ENCODE measurements at regions of chr14 and their contacts with region 1.

Region 1: DNA sequence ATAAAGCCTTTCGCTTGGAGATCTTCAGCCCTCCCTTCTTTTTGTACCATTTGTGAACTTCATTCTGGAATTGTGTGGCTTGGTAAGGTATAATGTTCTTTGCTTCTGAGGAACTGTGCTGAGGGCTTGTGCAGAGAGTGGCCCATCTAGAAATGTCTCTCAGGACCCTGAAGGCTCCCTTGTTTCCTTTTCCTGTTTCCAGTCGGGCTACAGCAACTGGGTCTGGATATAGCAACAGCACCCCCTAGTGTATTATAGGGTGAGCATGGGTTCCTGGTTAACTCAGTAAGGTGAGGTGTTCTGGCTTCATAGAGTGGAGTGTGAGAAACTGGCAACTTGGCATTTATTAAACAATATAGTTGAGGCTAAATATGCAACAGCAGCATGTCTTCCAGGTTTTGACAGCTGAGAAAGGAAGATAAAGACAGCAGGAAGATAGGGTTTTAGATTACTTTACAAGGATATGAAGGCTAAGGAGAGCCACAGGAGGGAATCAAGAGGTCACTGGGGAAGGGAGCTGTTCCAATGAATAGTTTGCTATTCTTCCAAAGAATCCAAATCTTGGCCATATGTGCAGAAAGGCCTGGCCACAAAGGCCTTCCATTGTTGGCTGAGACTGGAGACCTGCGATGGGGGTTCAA is 49.1 kb upstream of the RNU6-8 start:
- H3K4me3 ChIP-seq: no peak overlapping the region
- H3K27ac ChIP-seq: no peak overlapping the region
- H3K4me1 ChIP-seq: no peaks in the 10 kb centered on the region
- CTCF ChIP-seq: peak; percentile 55

Region 2: GRCh38 chr14:31934767-31935266 is 317.3 kb before region 1 on chr14:
- CTCF ChIA-PET with region 1: interaction called, 35 read pairs
- POLR2A ChIA-PET with region 1: interaction called, 4 read pairs
- H3K4me3 ChIP-seq: no peak overlapping the region
- H3K27ac ChIP-seq: no peak overlapping the region
- H3K4me1 ChIP-seq: peaks cover 17% of the 10 kb centered on the region
- CTCF ChIP-seq: peak; percentile 71

Region 3: DNA sequence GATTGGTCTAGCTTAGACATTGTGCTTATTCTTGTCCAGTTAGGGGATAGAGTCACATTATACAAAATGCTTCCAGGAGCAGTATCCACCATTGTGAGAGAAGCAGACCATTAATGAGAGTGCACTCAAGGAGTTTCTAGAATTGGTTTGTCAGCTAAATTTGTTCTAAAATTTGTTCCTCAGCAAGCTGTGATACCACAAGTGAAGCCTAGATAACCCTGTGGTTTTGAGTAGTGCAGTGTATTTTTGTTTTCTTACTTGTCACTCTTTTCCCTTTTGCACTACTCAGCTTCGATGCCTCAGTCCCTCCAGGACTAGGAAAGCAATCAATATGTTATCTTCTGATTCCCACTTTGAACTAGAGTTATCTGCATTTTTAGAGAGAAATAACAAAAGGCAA is 34.5 kb after region 1 on chr14:
- CTCF ChIA-PET with region 1: no interaction called
- POLR2A ChIA-PET with region 1: no interaction called
- H3K4me3 ChIP-seq: no peak overlapping the region
- H3K27ac ChIP-seq: no peak overlapping the region
- H3K4me1 ChIP-seq: no peaks in the 10 kb centered on the region
- CTCF ChIP-seq: no peak

Region 4: DNA sequence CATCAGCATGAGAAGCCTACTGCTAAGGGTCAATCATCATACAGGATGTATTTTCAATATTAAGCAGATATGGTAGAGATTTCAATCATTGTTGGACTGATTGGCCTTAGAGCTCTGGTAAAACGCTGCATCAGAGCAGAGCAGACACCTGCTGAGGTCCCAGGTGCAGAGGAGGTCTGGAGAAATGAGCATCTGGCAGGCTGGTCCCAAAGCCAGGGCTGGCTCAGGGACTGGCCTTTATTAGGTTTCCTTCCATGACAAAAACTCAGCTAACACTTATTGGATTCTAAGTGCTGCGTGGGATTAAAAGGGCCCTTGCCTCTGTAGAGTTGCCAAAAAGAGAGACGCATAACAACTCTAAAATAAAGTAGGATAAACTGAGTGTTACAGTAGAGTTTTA is 106.6 kb after region 1 on chr14:
- CTCF ChIA-PET with region 1: no interaction called
- POLR2A ChIA-PET with region 1: no interaction called
- H3K4me3 ChIP-seq: no peak overlapping the region
- H3K27ac ChIP-seq: no peak overlapping the region
- H3K4me1 ChIP-seq: no peaks in the 10 kb centered on the region
- CTCF ChIP-seq: no peak

Region 5: DNA sequence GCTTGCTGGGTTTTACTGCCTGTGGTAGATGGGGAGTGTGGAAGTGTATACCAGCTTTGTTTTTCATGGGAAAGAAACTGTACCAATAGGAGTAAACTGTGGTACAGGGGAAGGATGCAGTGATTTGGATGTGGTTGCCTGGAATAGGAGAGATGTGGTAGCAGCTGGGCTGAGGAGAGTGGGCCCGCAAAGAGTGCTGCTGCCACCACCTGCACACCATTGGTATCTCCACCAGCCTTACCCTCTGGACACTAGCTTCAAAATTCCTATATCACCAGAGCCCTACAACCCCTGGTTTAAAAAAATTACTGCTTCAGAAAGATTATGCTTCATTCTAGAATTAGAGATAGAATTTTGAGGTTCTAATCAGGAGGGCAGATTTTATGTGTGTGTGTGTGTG is 130.6 kb after region 1 on chr14:
- CTCF ChIA-PET with region 1: interaction called, 21 read pairs
- POLR2A ChIA-PET with region 1: no interaction called
- H3K4me3 ChIP-seq: no peak overlapping the region
- H3K27ac ChIP-seq: no peak overlapping the region
- H3K4me1 ChIP-seq: no peaks in the 10 kb centered on the region; the same call in 1 of the 2 replicates
- CTCF ChIP-seq: peak; percentile 55

Region 6: DNA sequence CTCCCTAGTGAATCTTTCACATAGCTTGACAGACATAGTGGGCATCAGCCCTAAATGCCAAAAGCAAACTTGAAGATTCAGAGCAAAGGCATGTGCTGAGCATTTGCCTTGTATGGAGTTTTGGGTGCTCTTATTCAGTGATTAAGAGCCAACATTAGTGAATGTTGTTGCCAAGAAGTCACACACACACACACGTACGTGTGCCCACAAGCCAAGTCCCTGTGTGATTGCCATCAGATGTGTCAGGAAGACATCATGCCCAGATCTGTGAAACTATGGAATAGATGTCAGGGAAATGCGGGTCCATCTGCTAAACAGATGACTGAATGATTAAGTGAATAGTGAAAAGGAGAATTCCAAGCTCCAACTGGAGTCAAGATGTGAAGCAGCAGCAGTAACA is 225.9 kb after region 1 on chr14:
- CTCF ChIA-PET with region 1: interaction called, 13 read pairs
- POLR2A ChIA-PET with region 1: no interaction called
- H3K4me3 ChIP-seq: no peak overlapping the region
- H3K27ac ChIP-seq: no peak overlapping the region
- H3K4me1 ChIP-seq: no peaks in the 10 kb centered on the region
- CTCF ChIP-seq: no peak

Measured in HEK293 (cell line).